Left cardiac atrium (tissue), 4 donors: ENCODE measurements at regions of chr13 and their contacts with region 1.

Region 1: DNA sequence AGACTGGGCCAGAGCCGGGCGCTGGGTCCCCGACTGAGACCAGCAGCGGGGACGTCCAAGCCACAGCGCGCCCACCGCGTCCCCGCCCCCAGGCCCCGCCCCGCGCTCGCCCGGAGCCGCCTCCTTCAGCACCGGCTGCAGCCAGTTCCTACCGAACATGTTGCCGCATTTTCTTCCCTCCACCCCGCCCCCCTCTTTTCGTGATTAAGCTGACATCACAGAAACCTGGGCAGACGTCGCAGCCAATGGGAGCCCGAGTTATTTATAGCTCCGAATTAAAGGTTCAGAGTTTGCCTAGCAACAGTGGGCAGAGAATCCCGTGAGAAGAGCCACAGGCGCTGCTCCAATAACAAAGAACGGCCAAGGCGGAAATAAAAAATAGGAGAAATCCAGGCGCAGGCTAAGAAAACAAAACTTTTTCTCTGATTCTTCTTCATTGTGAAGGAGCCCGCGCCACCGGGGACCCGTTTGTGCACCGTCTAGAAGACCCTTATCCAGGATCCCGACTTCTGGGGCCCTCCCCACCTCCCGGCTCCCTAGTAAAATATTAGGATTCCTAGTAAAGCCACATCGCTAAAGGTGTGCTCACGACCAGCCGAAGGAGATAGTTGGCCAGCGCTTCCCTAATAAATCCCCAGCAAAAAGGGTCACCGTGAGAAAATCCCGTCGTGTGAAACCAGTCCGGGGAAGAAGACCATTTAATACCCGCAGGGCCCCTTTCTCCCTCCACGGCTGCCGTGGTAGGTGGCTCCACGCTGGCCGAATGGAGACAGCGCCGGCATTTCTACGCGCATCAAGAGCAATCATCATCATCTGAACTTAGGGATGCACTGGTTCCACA is 61.7 kb downstream of the SERP2 start:
- DNase-seq: peak; percentile 94
- ATAC-seq: peak; percentile 83 to 85

Region 2: GRCh38 chr13:43915451-43915850 is 519.9 kb before region 1 on chr13:
- intact Hi-C with region 1: loop called in 1 of 2 experiments (anchors 5 kb)
- DNase-seq: no peak
- ATAC-seq: no peak

Region 3: GRCh38 chr13:44191504-44192171 is 243.7 kb before region 1 on chr13:
- intact Hi-C with region 1: loop called (anchors 5 to 10 kb)
- DNase-seq: peak; percentile 45
- ATAC-seq: peak; percentile 91 to 94

Region 4: GRCh38 chr13:44300895-44301638 is 134.3 kb before region 1 on chr13:
- intact Hi-C with region 1: loop called in 1 of 2 experiments (anchors 10 kb)
- DNase-seq: peak; percentile 47
- ATAC-seq: peak; percentile 54 to 89

Region 5: GRCh38 chr13:44396701-44397580 is 38.4 kb before region 1 on chr13:
- intact Hi-C with region 1: loop called in 1 of 2 experiments (anchors 5 kb)
- DNase-seq: peak; percentile 36
- ATAC-seq: peak; percentile 80 to 82

Region 6: DNA sequence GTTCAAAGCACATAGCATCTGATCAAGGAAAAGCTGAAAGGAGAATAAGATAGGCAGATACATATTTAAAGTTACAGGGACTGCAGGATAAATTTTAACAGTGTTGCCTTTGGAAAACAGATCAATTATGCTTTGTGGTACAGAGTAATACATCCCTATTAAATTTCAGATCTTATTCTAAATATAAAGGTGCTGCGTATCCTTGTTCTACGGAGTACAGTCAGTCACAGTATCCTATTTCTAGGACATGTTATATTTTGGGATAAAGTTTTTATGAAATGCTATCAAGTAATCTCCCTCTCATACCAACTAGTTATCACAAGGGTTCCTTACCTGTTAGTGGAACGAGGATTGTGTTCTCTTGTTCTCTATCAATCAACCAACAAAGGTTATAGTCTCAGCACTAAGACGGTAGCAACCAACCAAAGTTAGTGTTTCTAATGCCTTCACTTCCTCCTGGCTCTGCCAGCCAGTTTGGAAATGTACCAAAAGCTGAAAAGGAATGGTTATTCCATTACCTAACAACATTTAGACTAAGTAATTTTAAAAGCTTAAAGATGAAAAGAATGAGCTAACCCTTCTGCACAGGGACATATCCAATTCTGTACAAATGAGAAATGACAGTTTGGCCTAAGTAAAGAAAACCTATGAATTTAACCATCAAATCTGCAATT is 105.5 kb after region 1 on chr13:
- intact Hi-C with region 1: no loop called
- DNase-seq: no peak
- ATAC-seq: no peak

Region 7: GRCh38 chr13:45040622-45041021 is 605.3 kb after region 1 on chr13:
- intact Hi-C with region 1: no loop called
- DNase-seq: no peak
- ATAC-seq: no peak